Natural killer cell (primary cell): ENCODE measurements at regions of chr20 and their contacts with region 1.

Region 1: DNA sequence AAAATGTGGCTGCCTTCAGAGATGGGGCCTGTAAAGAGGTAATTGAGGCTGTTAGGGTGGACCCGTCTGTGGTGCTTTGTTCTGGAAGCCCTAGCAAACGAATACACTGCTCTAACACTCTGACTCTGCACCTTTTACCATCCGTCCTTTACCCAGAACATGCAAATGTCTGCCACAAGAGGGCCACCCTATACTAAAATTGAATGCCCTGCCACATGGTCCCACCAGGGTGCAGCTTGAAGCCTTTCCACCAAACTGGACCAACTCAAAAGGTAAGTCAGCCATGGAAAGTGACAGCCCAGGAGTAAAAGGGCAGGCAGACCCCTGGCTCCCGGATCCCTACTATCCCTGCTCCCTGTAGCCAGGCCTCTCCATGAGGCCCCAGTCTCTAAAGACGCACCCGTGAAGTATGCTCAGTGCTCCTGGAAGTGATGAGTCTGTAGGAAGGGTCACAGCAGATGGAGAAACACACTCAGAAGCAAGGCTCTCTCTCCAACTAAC is 5.8 kb upstream of the BFSP1 start:
- DNase-seq: peak; percentile 52 to 85
- ATAC-seq: peak; percentile 95 to 100 (median 100)
- H3K4me3 ChIP-seq: no peak overlapping the region
- H3K4me3 Mint-ChIP-seq: no peak overlapping the region
- H3K27ac ChIP-seq: no peak overlapping the region
- H3K27ac Mint-ChIP-seq: peak overlapping the region in 1 of 2 donors; percentile 53
- H3K4me1 ChIP-seq: peaks cover 14% of the 10 kb centered on the region
- H3K4me1 Mint-ChIP-seq: peaks cover 16 to 21% of the 10 kb centered on the region in 2 donors
- H3K27me3 ChIP-seq: peaks cover under 1% of the 10 kb centered on the region
- H3K27me3 Mint-ChIP-seq: peaks cover 12 to 29% of the 10 kb centered on the region in 2 donors
- CTCF ChIP-seq: peak; percentile 87

Region 2: DNA sequence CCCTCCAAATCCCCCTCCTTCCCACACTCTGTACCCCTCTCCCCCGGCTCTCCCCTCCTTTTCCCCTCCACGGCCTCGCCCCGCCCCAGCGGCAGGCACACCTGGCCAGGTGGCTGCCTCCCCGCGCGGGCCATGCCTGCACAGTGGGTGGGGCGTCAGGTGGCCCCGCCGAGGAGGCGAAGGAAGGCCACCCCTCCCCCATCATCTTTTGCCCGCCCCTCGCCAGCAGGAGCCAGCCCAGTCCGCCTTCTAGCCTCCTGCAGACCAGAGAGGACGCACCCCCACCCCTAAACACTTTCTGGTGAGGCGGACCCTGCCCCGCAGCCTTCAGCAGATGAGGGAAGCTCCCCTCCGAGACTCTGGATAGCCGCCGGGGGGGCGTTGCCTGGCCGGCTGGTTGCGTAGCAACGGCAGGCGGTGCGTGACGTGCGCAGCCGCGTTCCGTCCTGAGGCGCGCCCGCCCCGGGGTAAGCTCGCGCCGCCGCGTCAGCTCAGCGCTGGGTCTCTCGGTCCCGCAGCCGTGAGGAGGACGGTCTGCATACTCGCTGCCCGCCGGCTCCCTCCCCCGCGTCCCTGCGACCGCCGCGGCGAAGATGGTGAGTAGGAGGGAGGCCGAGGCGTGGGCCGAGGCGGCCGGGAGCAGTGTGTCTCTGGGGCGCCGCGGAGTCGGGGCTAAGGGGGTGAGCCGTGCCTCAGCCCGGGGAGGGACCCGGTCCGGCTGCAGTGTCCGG is 32.8 kb after region 1 on chr20 and contains the start of gene DSTN:
- intact Hi-C with region 1: loop called (anchors 1 kb)
- DNase-seq: peak; percentile 86 to 94
- ATAC-seq: peak; percentile 88 to 94 (median 90)
- H3K4me3 ChIP-seq: peak within 1 kb of the TSS; percentile 84
- H3K4me3 Mint-ChIP-seq: peak within 1 kb of the TSS; percentile 99
- H3K27ac ChIP-seq: peak within 1 kb of the TSS; percentile 78
- H3K27ac Mint-ChIP-seq: peak within 1 kb of the TSS; percentile 92 to 97
- H3K4me1 ChIP-seq: peaks cover 11% of the 10 kb centered on the region
- H3K4me1 Mint-ChIP-seq: peaks cover 35% of the 10 kb centered on the region in 2 donors
- H3K27me3 ChIP-seq: peaks cover 9% of the 10 kb centered on the region
- H3K27me3 Mint-ChIP-seq: peaks cover 0 to 5% of the 10 kb centered on the region in 2 donors
- CTCF ChIP-seq: no peak
- total RNA-seq, gene DSTN: 47.5 to 73.5 (median 70.0) TPM

Region 3: GRCh38 chr20:17617551-17618223 is 80.7 kb after region 1 on chr20:
- intact Hi-C with region 1: loop called (anchors 1 kb)
- DNase-seq: peak; percentile 48 to 72
- ATAC-seq: peak; percentile 30 to 44 (median 30)
- H3K4me3 ChIP-seq: no peak overlapping the region
- H3K4me3 Mint-ChIP-seq: no peak overlapping the region
- H3K27ac ChIP-seq: no peak overlapping the region
- H3K27ac Mint-ChIP-seq: no peak overlapping the region
- H3K4me1 ChIP-seq: peaks cover 36% of the 10 kb centered on the region
- H3K4me1 Mint-ChIP-seq: peaks cover 14 to 20% of the 10 kb centered on the region in 2 donors
- H3K27me3 ChIP-seq: no peaks in the 10 kb centered on the region
- H3K27me3 Mint-ChIP-seq: no peaks in the 10 kb centered on the region
- CTCF ChIP-seq: peak; percentile 67

Region 4: DNA sequence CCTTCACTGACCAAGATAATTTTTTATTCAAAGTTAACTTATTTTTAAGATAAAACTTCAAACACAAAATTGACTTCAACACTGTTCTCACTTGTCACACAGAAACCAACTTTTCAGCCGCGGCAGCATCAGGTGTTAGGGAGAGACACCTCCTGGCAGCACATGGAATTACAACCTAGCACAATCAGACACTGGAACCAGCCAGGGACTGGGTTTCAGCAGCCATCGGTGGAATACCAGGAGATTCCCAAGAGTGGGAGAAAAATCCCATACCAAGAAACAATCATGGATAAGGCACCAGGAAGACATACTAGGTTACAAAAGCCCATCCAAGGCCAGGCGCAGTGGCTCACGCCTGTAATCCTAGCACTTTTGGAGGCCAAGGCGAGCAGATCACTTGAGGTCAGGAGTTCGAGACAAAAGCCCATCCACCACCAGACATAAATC is 361.6 kb after region 1 on chr20:
- intact Hi-C with region 1: loop called (anchors 1 kb)
- DNase-seq: peak; percentile 64 to 83
- ATAC-seq: peak; percentile 82 to 93 (median 90)
- H3K4me3 ChIP-seq: no peak overlapping the region
- H3K4me3 Mint-ChIP-seq: no peak overlapping the region
- H3K27ac ChIP-seq: no peak overlapping the region
- H3K27ac Mint-ChIP-seq: no peak overlapping the region
- H3K4me1 ChIP-seq: peaks cover 19% of the 10 kb centered on the region
- H3K4me1 Mint-ChIP-seq: peaks cover 15 to 16% of the 10 kb centered on the region in 2 donors
- H3K27me3 ChIP-seq: peaks cover 3% of the 10 kb centered on the region
- H3K27me3 Mint-ChIP-seq: peaks cover 21 to 31% of the 10 kb centered on the region in 2 donors
- CTCF ChIP-seq: peak; percentile 97

Region 5: DNA sequence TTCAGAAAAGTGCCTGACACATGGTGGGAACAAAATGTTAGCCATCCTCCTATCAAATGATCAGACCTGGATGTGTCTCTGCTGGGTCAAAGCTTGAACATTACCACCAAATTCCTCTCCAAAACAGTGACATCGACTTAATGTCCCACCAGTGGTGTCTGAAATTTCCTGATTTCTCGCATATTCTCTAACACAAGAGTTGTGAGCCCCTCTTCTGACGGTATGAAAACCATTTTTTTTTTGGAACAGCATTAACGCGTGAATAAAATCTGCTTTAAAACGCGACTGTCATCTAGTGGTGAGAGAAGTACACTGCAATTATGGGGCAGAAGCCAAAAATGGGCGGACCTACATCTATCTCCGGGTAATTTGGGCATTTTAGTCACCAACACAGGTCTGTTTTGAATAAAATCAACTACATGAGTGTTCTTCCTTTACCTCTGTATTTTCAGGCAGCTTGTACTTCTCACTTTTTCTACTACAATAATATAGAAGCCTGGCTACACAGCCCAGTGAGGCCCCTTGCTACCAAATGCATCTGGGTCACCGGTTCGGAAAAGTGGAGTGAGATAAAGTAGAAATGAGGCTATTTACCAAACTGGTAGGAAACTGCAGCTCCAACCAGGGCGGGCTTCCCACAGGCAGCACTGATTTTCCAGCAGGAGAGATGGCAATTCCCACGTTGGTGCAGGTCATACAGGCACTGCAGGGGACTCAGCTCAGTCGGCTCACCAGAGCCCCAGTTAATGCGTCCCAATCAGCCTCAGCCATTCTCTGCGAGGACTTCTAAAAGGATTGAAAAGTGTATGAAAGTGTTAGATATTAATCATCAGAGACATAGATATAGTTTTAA is 459.2 kb after region 1 on chr20:
- intact Hi-C with region 1: loop called (anchors 1 kb)
- DNase-seq: peak in 1 of 2 donors; percentile 80
- ATAC-seq: peak; percentile 87 to 99 (median 95)
- H3K4me3 ChIP-seq: no peak overlapping the region
- H3K4me3 Mint-ChIP-seq: no peak overlapping the region
- H3K27ac ChIP-seq: no peak overlapping the region
- H3K27ac Mint-ChIP-seq: peak overlapping the region in 1 of 2 donors; percentile 37
- H3K4me1 ChIP-seq: peaks cover 3% of the 10 kb centered on the region
- H3K4me1 Mint-ChIP-seq: peaks cover 6 to 7% of the 10 kb centered on the region in 2 donors
- H3K27me3 ChIP-seq: no peaks in the 10 kb centered on the region
- H3K27me3 Mint-ChIP-seq: peaks cover 0 to 10% of the 10 kb centered on the region in 2 donors
- CTCF ChIP-seq: peak; percentile 92